MCF 10A (cell line): ENCODE measurements at regions of chr4 and their contacts with region 1.

Region 1: GRCh38 chr4:52712172-52712990 is 38.8 kb downstream of the ERVMER34-1 start:
- DNase-seq: peak; percentile 97
- H3K4me3 Mint-ChIP-seq: peak overlapping the region; percentile 84
- H3K27ac Mint-ChIP-seq: peak overlapping the region; percentile 94
- H3K4me1 Mint-ChIP-seq: peaks cover 20% of the 10 kb centered on the region
- H3K27me3 Mint-ChIP-seq: no peaks in the 10 kb centered on the region
- CTCF ChIP-seq: no peak

Region 2: GRCh38 chr4:52643785-52644244 is 68.6 kb before region 1 on chr4:
- CTCF ChIA-PET with region 1: no interaction called
- POLR2A ChIA-PET with region 1: interaction called, 28 read pairs
- intact Hi-C with region 1: no loop called
- DNase-seq: peak; percentile 75
- H3K4me3 Mint-ChIP-seq: no peak overlapping the region
- H3K27ac Mint-ChIP-seq: no peak overlapping the region
- H3K4me1 Mint-ChIP-seq: peaks cover 32% of the 10 kb centered on the region
- H3K27me3 Mint-ChIP-seq: no peaks in the 10 kb centered on the region
- CTCF ChIP-seq: no peak

Region 3: DNA sequence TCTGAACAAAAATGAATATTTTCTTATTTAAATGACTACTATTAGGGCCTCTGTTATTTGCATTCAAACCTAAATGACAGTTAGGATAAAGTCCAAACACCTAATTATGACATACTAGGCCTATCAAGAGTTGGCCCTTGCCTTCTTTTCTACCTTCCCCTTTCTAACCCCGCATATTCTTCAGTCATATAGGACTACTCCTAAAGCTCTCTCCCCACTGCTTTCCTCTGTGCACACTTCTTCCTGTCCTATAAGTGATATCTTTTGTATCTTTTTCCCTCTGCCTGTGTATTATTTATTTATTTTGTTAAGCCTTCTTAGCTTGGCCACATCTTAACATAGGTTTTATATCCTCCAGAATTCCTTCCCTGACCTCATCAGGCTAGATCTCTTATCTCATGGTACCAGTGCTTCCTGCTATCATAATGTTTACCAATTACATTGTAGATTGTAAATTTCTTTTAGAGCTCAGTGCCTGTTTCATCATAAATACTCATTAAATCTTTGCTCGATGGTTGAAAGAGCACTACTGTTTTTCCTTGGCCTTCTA is 16.4 kb after region 1 on chr4:
- CTCF ChIA-PET with region 1: interaction called, 3 read pairs
- POLR2A ChIA-PET with region 1: interaction called, 47 read pairs
- intact Hi-C with region 1: no loop called
- DNase-seq: no peak
- H3K4me3 Mint-ChIP-seq: no peak overlapping the region
- H3K27ac Mint-ChIP-seq: no peak overlapping the region
- H3K4me1 Mint-ChIP-seq: no peaks in the 10 kb centered on the region
- H3K27me3 Mint-ChIP-seq: no peaks in the 10 kb centered on the region
- CTCF ChIP-seq: no peak

Region 4: DNA sequence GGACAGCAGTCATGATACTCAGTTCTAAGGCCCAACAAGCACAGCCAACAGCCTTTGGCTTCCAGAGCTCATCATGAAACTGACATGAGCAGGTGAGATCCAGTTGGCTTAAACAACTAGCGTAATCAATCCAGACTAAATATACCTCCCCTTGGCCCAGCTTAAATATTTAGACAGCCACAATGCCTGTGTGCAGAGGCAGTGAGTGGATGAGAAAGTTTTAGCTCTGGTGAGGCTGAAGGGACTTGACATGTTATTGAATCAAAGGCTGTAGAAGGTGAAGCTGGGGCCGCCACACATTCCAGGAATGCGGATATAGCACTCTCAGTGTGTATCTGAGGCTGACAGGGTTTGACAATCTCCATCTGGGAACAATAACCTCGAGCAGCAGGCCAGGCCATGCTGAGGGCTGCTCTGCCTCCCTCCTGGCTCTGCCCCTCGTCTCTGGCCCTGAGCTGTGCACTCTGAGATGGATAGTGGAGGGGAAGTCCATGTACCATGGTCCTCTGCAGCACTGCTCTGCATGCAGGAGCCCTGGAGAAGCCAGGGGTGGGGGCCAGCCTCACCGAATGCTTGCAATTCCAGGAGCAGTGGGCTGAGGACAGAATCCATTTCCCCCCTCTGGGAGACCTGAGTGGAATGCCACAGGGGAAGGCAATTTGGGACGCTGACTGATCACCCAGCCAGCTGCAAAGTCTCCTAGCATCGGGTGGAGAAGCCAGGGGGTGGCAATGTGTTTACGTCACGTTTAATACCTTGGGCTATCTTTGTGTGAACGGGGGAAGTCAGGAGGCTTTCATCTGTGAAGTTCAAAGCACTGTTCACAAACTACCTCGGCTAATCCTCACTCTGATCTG is 112.5 kb after region 1 on chr4:
- CTCF ChIA-PET with region 1: no interaction called
- POLR2A ChIA-PET with region 1: interaction called, 45 read pairs
- intact Hi-C with region 1: no loop called
- DNase-seq: no peak
- H3K4me3 Mint-ChIP-seq: no peak overlapping the region
- H3K27ac Mint-ChIP-seq: peak overlapping the region; percentile 92
- H3K4me1 Mint-ChIP-seq: peaks cover 38% of the 10 kb centered on the region
- H3K27me3 Mint-ChIP-seq: no peaks in the 10 kb centered on the region
- CTCF ChIP-seq: no peak

Region 5: GRCh38 chr4:52861879-52862616 is 149.7 kb after region 1 on chr4 and contains the start of gene RASL11B:
- CTCF ChIA-PET with region 1: no interaction called
- POLR2A ChIA-PET with region 1: interaction called, 30 read pairs
- intact Hi-C with region 1: loop called (anchors 2 kb)
- DNase-seq: peak; percentile 80
- H3K4me3 Mint-ChIP-seq: peak within 1 kb of the TSS; percentile 81
- H3K27ac Mint-ChIP-seq: no peak within 1 kb of the TSS
- H3K4me1 Mint-ChIP-seq: peaks cover 16% of the 10 kb centered on the region
- H3K27me3 Mint-ChIP-seq: no peaks in the 10 kb centered on the region
- CTCF ChIP-seq: no peak
- total RNA-seq, gene RASL11B: 1.7 and 2.6 TPM in 2 replicates

Region 6: GRCh38 chr4:53366301-53366716 is 653.9 kb after region 1 on chr4:
- CTCF ChIA-PET with region 1: no interaction called
- POLR2A ChIA-PET with region 1: no interaction called
- intact Hi-C with region 1: no loop called
- DNase-seq: no peak
- H3K4me3 Mint-ChIP-seq: peak overlapping the region; percentile 92
- H3K27ac Mint-ChIP-seq: peak overlapping the region; percentile 76
- H3K4me1 Mint-ChIP-seq: peaks cover 24% of the 10 kb centered on the region
- H3K27me3 Mint-ChIP-seq: peaks cover 31% of the 10 kb centered on the region
- CTCF ChIP-seq: no peak